ENCODE measurements at regions of chr6 and their contacts with region 1.

Region 1: DNA sequence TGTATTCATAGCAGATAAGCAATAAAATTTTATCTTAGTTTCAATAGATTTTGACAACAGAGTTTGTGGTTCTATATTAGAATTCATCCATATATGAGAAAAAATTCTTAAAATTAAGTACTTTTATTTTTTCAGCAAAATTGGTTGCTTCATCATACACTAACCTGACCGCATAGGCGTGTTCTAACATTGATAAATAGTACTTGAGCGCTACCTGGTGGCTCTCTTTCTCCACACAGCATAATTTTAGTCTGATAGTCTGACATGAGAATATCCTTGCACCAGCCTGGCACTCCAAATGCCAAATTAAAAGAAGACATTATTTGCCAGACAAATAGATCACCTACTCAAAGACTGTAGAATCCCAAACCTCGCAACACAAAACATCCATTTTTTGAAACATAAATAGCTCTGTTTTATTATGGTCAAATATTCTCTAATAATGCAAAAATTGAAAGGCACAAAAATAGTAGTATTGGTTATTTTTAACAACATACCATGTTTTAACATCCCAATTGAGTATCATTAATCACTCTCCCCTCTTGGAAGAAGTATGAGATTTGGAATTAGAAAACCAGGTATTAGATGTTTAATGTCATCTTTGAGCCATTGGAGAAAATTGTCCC is 33.0 kb upstream of the FILIP1 start:
- DNase-seq: no peak
- ATAC-seq: peak; percentile 91

Region 2: DNA sequence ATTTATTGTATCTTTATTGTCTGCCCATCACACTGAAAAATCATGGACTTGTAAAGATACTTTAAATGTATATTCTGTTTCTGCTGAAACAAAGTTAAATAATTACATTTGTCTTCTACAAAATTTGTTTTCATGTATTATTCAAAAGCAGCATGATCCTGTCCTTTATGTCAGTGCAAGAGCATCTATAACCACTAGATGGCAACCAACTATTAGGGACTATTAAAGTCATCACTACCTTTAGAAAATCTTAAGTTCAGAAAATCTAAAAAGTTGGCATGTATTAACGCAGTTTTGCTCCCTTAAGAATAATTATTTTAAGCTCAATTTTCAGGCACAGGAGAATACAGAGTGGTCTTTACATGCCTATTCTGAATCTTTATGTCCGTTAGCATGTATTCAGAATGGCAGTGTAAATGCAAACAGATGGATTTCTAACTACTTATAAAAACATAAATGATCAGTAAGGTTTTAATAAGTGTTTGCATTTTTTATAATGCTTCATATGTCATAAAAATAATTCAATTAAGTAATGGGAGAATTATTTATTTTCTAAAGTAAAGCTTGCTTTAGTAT is 259.8 kb before region 1 on chr6:
- intact Hi-C with region 1: loop called (anchors 5 kb)
- DNase-seq: no peak
- ATAC-seq: peak; percentile 80

Region 3: GRCh38 chr6:75735491-75736186 is 209.0 kb after region 1 on chr6:
- intact Hi-C with region 1: no loop called
- DNase-seq: no peak
- ATAC-seq: no peak